Tibial artery (tissue), 4 donors: ENCODE measurements at regions of chr10 and their contacts with region 1.

Region 1: DNA sequence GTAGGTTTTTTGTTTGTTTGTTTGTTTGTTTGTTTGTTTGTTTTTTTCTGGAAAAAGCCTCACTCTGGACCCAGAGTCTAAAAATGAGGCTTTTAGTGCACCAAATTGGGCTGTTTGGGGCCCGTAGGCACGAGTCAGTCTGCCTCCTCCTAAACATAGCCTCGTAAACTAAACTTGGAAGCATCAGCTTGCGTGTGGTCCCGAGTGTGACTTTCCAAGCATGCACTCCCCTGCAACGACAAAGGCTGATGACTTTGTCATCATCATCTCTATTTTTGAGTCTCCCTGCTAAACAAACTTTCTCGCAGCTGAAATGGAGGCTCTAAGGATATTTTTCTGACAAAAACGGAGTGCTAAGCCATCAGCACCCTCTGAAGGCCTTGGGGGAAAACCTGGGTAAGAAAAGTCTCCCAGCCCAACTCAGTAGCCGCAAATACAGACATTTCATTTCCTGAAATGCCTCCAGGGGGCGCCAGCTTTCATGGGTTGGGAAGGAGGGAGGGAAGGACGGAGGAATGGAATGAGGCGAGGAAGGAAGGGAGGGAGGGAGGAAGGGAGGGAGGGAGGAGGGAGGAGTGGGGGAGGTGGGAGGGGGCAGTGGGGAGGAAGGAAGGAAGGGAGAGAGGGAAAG is 245.9 kb downstream of the KCNMA1 start:
- DNase-seq: peak; percentile 87 to 93
- H3K4me3 ChIP-seq: no peak overlapping the region
- H3K27ac ChIP-seq: peak overlapping the region; percentile 82 to 91
- H3K4me1 ChIP-seq: peaks cover 5 to 77% (median 68%) of the 10 kb centered on the region in 4 donors
- H3K27me3 ChIP-seq: no peaks in the 10 kb centered on the region
- CTCF ChIP-seq: peak; percentile 56 to 78

Region 2: GRCh38 chr10:77173615-77174461 is 217.9 kb before region 1 on chr10:
- intact Hi-C with region 1: loop called (anchors 5 kb)
- DNase-seq: peak; percentile 76 to 86
- H3K4me3 ChIP-seq: no peak overlapping the region
- H3K27ac ChIP-seq: peak overlapping the region; percentile 46 to 54
- H3K4me1 ChIP-seq: peaks cover 0 to 34% (median 15%) of the 10 kb centered on the region in 4 donors
- H3K27me3 ChIP-seq: no peaks in the 10 kb centered on the region
- CTCF ChIP-seq: peak; percentile 90 to 94